WTC11 (cell line): ENCODE measurements at regions of chr10 and their contacts with region 1.

Region 1: GRCh38 chr10:94443549-94443948 is 41.2 kb downstream of the TBC1D12 start:
- DNase-seq: no peak
- ATAC-seq: no peak
- H3K4me3 Mint-ChIP-seq: no peak overlapping the region
- H3K27ac Mint-ChIP-seq: no peak overlapping the region
- H3K4me1 Mint-ChIP-seq: no peaks in the 10 kb centered on the region
- H3K27me3 Mint-ChIP-seq: no peaks in the 10 kb centered on the region
- CTCF ChIP-seq: no peak

Region 2: DNA sequence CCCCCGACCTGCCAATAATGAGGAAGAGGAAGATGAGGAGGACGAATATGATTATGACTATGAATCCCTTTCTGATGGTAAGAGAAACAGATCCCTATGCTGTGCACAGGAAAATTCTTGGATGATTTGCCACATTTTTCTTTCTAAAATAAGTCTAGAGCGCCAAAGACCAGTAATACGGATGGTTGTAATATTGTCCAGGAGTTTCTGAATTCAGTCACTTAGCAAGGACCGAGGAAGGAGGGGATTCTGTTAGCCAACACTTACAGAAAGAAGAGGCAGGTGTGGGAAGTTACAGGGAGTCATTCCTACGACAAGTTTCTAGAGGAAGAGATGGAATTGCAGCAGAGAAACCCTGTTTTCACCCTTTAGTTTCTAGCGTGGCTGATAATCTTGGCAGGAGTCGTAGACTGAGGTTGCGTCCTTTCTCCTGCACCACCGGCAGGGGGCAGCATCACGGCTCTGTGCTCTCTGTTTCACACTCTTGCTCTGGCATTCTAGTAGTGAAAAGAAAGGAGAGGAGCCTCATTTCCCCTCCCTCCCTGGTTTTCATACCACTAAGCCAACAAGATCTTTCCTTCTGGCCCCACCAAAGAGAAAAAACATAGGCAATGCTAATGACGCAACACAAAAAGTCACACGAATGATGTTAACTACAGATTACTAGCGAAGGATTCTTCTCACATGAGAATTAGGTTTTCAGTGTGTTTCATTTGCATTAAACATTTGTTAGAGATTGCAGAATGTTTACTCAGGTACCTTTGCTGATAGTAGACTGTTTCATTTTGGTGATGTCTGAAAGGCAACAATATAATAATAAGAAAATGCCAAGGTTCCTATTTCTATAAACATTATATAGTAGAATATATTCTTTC is 163.5 kb before region 1 on chr10:
- CTCF ChIA-PET with region 1: interaction called, 10 read pairs
- POLR2A ChIA-PET with region 1: no interaction called
- DNase-seq: peak; percentile 77
- ATAC-seq: peak; percentile 99
- H3K4me3 Mint-ChIP-seq: no peak overlapping the region
- H3K27ac Mint-ChIP-seq: no peak overlapping the region
- H3K4me1 Mint-ChIP-seq: peaks cover 3% of the 10 kb centered on the region
- H3K27me3 Mint-ChIP-seq: no peaks in the 10 kb centered on the region
- CTCF ChIP-seq: peak; percentile 88

Region 3: GRCh38 chr10:94315024-94315451 is 128.5 kb before region 1 on chr10:
- CTCF ChIA-PET with region 1: interaction called, 22 read pairs
- POLR2A ChIA-PET with region 1: no interaction called
- DNase-seq: no peak
- ATAC-seq: peak; percentile 70
- H3K4me3 Mint-ChIP-seq: no peak overlapping the region
- H3K27ac Mint-ChIP-seq: no peak overlapping the region
- H3K4me1 Mint-ChIP-seq: no peaks in the 10 kb centered on the region
- H3K27me3 Mint-ChIP-seq: 0 out of 2 replicates have a peak, but pooled peaks cover 5% of the 10 kb centered on the region
- CTCF ChIP-seq: no peak

Region 4: DNA sequence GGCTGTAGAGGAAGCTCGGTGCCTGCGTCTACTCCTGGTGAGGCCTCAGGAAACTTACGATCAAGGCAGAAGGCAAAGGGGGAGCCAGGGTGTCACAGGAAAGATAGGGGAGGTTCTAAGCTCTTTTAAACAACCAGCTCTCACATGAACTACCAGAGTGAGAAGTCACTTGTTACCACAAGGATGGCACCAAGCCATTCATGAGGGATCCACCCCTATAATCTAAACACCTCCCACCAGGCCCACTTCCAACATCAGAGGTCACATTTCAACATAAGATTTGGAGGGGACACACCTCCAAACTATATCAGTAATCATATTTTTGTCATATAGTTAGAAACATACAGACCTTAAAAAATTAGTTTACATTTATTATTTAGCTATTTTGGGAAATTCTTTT is 90.2 kb before region 1 on chr10:
- CTCF ChIA-PET with region 1: interaction called, 10 read pairs
- POLR2A ChIA-PET with region 1: no interaction called
- DNase-seq: no peak
- ATAC-seq: no peak
- H3K4me3 Mint-ChIP-seq: no peak overlapping the region
- H3K27ac Mint-ChIP-seq: no peak overlapping the region
- H3K4me1 Mint-ChIP-seq: no peaks in the 10 kb centered on the region
- H3K27me3 Mint-ChIP-seq: no peaks in the 10 kb centered on the region
- CTCF ChIP-seq: no peak

Region 5: GRCh38 chr10:94402015-94402842 is 41.3 kb before region 1 on chr10 and contains the start of gene TBC1D12:
- CTCF ChIA-PET with region 1: interaction called, 16 read pairs
- POLR2A ChIA-PET with region 1: no interaction called
- DNase-seq: peak; percentile 94
- ATAC-seq: peak; percentile 89
- H3K4me3 Mint-ChIP-seq: peak within 1 kb of the TSS; percentile 81
- H3K27ac Mint-ChIP-seq: no peak within 1 kb of the TSS
- H3K4me1 Mint-ChIP-seq: peaks cover 16% of the 10 kb centered on the region
- H3K27me3 Mint-ChIP-seq: peaks cover 45% of the 10 kb centered on the region
- CTCF ChIP-seq: no peak
- total RNA-seq, gene TBC1D12: 2.2 to 3.1 TPM (median 2.6 TPM) in 3 replicates

Region 6: GRCh38 chr10:94432443-94432842 is 11.1 kb before region 1 on chr10:
- CTCF ChIA-PET with region 1: interaction called, 24 read pairs
- POLR2A ChIA-PET with region 1: no interaction called
- DNase-seq: no peak
- ATAC-seq: no peak
- H3K4me3 Mint-ChIP-seq: no peak overlapping the region
- H3K27ac Mint-ChIP-seq: no peak overlapping the region
- H3K4me1 Mint-ChIP-seq: no peaks in the 10 kb centered on the region
- H3K27me3 Mint-ChIP-seq: no peaks in the 10 kb centered on the region
- CTCF ChIP-seq: no peak

Region 7: DNA sequence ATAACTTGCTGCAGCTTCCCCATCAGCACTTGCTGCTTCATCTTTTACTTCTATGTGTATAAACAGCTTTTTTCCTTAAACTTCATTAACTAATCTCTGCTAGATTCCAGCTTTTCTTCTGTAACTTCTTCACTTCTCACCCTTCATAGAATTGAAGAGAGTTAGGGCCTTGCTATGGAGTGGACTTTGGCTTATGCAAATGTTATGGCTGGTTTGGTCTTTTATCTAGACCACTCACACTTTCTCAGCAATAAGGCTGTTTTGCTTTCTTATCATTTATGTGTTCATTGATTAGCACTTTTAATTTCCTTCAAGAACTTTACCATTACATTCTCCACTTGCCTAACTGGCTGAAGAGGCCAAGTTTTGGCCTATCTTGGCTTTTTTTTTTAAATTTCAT is 37.9 kb after region 1 on chr10:
- CTCF ChIA-PET with region 1: no interaction called
- POLR2A ChIA-PET with region 1: no interaction called
- DNase-seq: no peak
- ATAC-seq: no peak
- H3K4me3 Mint-ChIP-seq: no peak overlapping the region
- H3K27ac Mint-ChIP-seq: no peak overlapping the region
- H3K4me1 Mint-ChIP-seq: no peaks in the 10 kb centered on the region
- H3K27me3 Mint-ChIP-seq: no peaks in the 10 kb centered on the region
- CTCF ChIP-seq: no peak

Region 8: DNA sequence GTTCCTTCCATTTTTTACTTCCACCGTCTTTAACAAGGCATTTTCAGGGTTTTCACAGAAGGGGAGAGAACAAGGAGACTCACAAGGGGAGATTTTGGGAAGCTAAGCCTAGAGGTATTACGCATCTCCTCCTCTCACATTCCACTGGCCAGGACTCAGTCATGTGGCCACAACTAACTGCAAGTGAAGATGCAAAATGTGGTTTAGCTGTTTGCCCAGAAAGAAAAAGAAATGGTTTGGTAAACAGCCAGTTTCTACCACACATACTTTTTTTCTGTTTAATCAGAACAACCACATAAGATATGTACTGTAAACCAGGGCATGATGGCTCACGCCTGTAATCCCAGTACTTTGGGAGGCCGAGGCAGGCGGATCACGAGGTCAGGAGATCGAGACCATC is 80.6 kb after region 1 on chr10:
- CTCF ChIA-PET with region 1: no interaction called
- POLR2A ChIA-PET with region 1: no interaction called
- DNase-seq: no peak
- ATAC-seq: no peak
- H3K4me3 Mint-ChIP-seq: no peak overlapping the region
- H3K27ac Mint-ChIP-seq: no peak overlapping the region
- H3K4me1 Mint-ChIP-seq: no peaks in the 10 kb centered on the region
- H3K27me3 Mint-ChIP-seq: no peaks in the 10 kb centered on the region
- CTCF ChIP-seq: no peak